A673 (cell line): ENCODE measurements at regions of chr6 and their contacts with region 1.

Region 1: DNA sequence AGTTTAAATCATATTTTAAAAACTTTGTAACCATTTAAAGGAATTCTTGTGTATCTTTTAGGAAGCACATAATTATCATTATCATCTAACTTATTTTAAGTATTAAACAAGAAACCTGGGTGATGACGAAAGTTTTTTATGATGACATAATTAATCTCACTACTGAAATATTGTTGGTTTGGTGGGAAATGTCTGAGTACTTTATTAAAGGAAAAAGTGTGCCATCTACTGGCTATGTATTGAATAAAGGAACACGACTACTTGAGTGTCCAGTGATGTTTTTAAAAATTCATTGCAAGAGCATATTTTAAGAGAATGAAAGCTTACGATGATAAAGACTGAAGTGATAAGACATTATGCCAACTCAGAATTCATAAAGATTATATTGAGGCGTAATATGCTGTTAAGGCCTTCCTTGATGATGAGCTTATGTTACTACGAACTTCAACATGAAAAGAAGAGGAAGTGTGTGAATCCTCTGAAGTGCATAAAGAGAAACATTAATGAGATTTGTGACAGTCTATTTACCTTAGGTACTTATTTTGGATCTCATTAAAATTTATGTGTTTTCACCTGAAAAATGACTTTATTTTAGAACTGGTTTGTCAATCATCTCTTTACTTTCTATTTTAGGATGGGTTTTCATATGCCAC is 12.0 kb upstream of the TRMT11 start:
- DNase-seq: peak; percentile 78
- H3K4me3 ChIP-seq: no peak overlapping the region
- H3K27ac ChIP-seq: peak overlapping the region; percentile 41
- H3K4me1 ChIP-seq: no peaks in the 10 kb centered on the region
- H3K27me3 ChIP-seq: no peaks in the 10 kb centered on the region
- CTCF ChIP-seq: peak; percentile 71

Region 2: DNA sequence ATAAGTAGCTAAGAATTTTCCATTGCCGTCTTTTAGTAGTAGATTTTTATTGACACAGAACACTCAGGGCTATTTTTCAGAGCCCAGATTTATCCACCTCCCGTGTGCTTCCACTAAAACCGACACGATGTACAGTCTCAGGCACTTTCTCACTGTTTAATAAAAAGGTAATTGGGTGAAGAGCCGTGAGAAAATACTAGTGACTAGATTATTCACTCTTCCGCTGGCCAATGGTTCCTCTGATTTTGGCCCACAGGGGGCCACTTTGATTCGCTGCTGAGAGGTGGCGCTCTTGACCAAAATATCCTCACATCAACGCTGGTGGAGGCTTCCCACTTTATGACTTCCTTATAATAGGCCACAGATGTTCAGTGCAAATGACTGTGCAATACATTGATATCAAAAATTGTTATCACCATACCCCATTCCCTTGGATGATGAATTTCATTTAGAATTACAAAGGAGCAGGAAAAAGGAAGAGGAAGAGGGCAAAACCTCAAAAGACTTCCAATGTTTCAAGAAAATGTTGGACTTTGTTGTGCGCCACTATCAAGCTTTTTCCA is 660.2 kb before region 1 on chr6:
- CTCF ChIA-PET with region 1: no interaction called
- POLR2A ChIA-PET with region 1: no interaction called
- intact Hi-C with region 1: loop called (anchors 5 kb)
- DNase-seq: peak; percentile 82
- H3K4me3 ChIP-seq: no peak overlapping the region
- H3K27ac ChIP-seq: no peak overlapping the region
- H3K4me1 ChIP-seq: no peaks in the 10 kb centered on the region
- H3K27me3 ChIP-seq: no peaks in the 10 kb centered on the region
- CTCF ChIP-seq: peak; percentile 93

Region 3: GRCh38 chr6:125779924-125780539 is 194.3 kb before region 1 on chr6:
- CTCF ChIA-PET with region 1: no interaction called
- POLR2A ChIA-PET with region 1: no interaction called
- intact Hi-C with region 1: loop called (anchors 2 kb)
- DNase-seq: peak; percentile 96
- H3K4me3 ChIP-seq: peak overlapping the region; percentile 54
- H3K27ac ChIP-seq: peak overlapping the region; percentile 82
- H3K4me1 ChIP-seq: peaks cover 17% of the 10 kb centered on the region
- H3K27me3 ChIP-seq: no peaks in the 10 kb centered on the region
- CTCF ChIP-seq: no peak

Region 4: GRCh38 chr6:125858427-125859320 is 115.7 kb before region 1 on chr6:
- CTCF ChIA-PET with region 1: interaction called, 4 read pairs
- POLR2A ChIA-PET with region 1: no interaction called
- intact Hi-C with region 1: loop called (anchors 5 kb)
- DNase-seq: peak; percentile 74
- H3K4me3 ChIP-seq: no peak overlapping the region
- H3K27ac ChIP-seq: no peak overlapping the region
- H3K4me1 ChIP-seq: no peaks in the 10 kb centered on the region
- H3K27me3 ChIP-seq: no peaks in the 10 kb centered on the region
- CTCF ChIP-seq: peak; percentile 77

Region 5: GRCh38 chr6:126007800-126008199 is 33.5 kb after region 1 on chr6:
- CTCF ChIA-PET with region 1: no interaction called
- POLR2A ChIA-PET with region 1: no interaction called
- intact Hi-C with region 1: no loop called
- DNase-seq: no peak
- H3K4me3 ChIP-seq: no peak overlapping the region
- H3K27ac ChIP-seq: no peak overlapping the region
- H3K4me1 ChIP-seq: peaks cover 4% of the 10 kb centered on the region
- H3K27me3 ChIP-seq: no peaks in the 10 kb centered on the region
- CTCF ChIP-seq: no peak